Caco-2 (cell line): ENCODE measurements at regions of chr3 and their contacts with region 1.

Region 1: GRCh38 chr3:89851974-89852621 is 744.7 kb downstream of the EPHA3 start:
- DNase-seq: peak; percentile 52 to 69
- H3K4me3 ChIP-seq: no peak overlapping the region
- H3K4me3 Mint-ChIP-seq: no peak overlapping the region
- H3K27ac Mint-ChIP-seq: no peak overlapping the region
- H3K4me1 ChIP-seq: no peaks in the 10 kb centered on the region
- H3K4me1 Mint-ChIP-seq: no peaks in the 10 kb centered on the region
- H3K27me3 ChIP-seq: no peaks in the 10 kb centered on the region
- H3K27me3 Mint-ChIP-seq: no peaks in the 10 kb centered on the region
- CTCF ChIP-seq: peak; percentile 59 to 78

Region 2: DNA sequence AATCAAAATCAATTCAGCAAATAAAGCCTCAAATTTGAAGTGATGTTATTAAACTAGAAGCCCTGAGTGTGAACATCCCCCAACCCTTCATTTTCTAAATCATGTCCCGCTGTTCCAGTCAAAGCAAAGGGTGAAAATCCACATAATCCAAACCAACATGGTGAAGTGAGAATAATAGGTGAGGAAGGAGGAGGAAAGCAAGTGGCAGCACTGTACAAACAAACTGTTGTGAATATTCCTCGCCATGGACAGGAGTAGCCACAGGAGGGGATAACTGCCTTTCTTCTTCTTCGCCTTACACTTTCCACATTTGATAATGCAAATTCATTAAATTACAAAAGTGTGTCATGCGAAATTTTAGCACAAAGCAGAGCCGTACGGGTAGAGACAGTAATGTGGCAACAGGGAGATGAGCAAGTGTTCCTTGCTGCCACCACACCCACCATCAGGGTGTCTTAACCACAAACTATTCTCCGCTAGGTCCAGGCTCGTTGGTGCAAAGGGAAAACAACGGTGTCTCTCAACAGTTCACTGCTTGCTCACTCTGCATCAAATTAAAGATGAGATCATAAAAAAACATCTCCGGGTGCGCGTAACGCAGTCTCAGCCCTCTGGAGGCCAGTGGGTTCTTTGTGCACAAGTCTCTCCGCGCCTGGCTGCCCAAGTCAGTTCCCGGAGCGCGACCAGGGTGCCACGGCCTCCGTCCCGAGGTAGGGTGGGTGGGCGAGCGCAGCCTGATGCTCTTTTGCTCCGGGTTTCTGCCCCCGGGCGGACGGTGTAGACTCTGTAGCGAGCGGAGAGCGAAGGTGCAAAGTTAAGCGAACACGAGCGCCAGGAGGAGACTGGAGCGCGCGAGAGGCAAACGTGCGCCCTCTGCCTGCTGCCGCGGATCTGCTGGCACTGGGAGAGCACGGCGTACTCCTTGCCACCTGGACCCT is 737.9 kb before region 1 on chr3:
- CTCF ChIA-PET with region 1: no interaction called
- POLR2A ChIA-PET with region 1: no interaction called
- intact Hi-C with region 1: loop called (anchors 5 kb)
- DNase-seq: peak; percentile 61 to 67
- H3K4me3 ChIP-seq: peak overlapping the region; percentile 30
- H3K4me3 Mint-ChIP-seq: peak overlapping the region; percentile 67
- H3K27ac Mint-ChIP-seq: no peak overlapping the region
- H3K4me1 ChIP-seq: no peaks in the 10 kb centered on the region
- H3K4me1 Mint-ChIP-seq: no peaks in the 10 kb centered on the region
- H3K27me3 ChIP-seq: no peaks in the 10 kb centered on the region
- H3K27me3 Mint-ChIP-seq: no peaks in the 10 kb centered on the region
- CTCF ChIP-seq: peak; percentile 49 to 83

Region 3: GRCh38 chr3:89562373-89562772 is 289.7 kb before region 1 on chr3:
- CTCF ChIA-PET with region 1: no interaction called
- POLR2A ChIA-PET with region 1: no interaction called
- intact Hi-C with region 1: loop called (anchors 1 kb)
- DNase-seq: no peak
- H3K4me3 ChIP-seq: no peak overlapping the region
- H3K4me3 Mint-ChIP-seq: no peak overlapping the region
- H3K27ac Mint-ChIP-seq: no peak overlapping the region
- H3K4me1 ChIP-seq: no peaks in the 10 kb centered on the region
- H3K4me1 Mint-ChIP-seq: no peaks in the 10 kb centered on the region
- H3K27me3 ChIP-seq: no peaks in the 10 kb centered on the region
- H3K27me3 Mint-ChIP-seq: peaks cover 3% of the 10 kb centered on the region
- CTCF ChIP-seq: no peak